Activated T-helper 1 cell treated with anti-CD3 and anti-CD28 coated beads, Interleukin-12 subunit alpha, Interleukin-12 subunit beta, Interleukin-2, Interleukin-4 antibody, amounts not matched to agents 30 ng/mL and 10 ng/mL and 1 ng/mL, durations not matched to agents 14 hours and 24 hours and 36 hours (primary cell): ENCODE measurements at regions of chr13 and their contacts with region 1.

Region 1: GRCh38 chr13:32650705-32651311 is 64.6 kb downstream of the PDS5B start:
- DNase-seq: peak; percentile 42
- H3K4me3 Mint-ChIP-seq: no peak overlapping the region
- H3K27ac Mint-ChIP-seq: no peak overlapping the region
- H3K4me1 Mint-ChIP-seq: peaks cover 52% of the 10 kb centered on the region
- H3K27me3 Mint-ChIP-seq: no peaks in the 10 kb centered on the region

Region 2: DNA sequence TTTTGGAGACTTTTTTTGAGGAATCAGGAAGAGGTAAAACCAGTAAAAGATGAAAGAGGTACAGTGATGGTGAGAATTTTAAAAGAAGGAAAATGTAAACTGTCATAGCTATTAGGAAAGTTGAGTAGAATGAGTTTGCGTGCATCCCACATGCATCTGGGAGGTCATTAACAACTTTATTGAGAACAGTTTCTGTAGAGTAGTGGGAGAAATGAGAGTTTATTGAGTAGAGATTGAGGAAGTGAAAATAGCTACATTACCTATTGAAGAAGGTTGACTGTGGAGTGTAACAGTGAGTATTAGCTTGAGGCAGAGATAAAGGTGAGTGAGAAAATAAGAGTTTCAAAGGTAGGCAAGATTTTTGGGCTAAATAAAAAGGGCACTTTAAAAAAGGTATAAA is 296.8 kb before region 1 on chr13:
- intact Hi-C with region 1: no loop called
- DNase-seq: no peak
- H3K4me3 Mint-ChIP-seq: no peak overlapping the region
- H3K27ac Mint-ChIP-seq: no peak overlapping the region
- H3K4me1 Mint-ChIP-seq: peaks cover 9% of the 10 kb centered on the region
- H3K27me3 Mint-ChIP-seq: no peaks in the 10 kb centered on the region

Region 3: GRCh38 chr13:32639502-32640105 is 11.2 kb before region 1 on chr13:
- intact Hi-C with region 1: loop called (anchors 1 kb)
- DNase-seq: peak; percentile 25
- H3K4me3 Mint-ChIP-seq: no peak overlapping the region
- H3K27ac Mint-ChIP-seq: no peak overlapping the region
- H3K4me1 Mint-ChIP-seq: peaks cover 34% of the 10 kb centered on the region
- H3K27me3 Mint-ChIP-seq: no peaks in the 10 kb centered on the region

Region 4: GRCh38 chr13:32669030-32669646 is 18.3 kb after region 1 on chr13:
- intact Hi-C with region 1: loop called (anchors 1 kb)
- DNase-seq: no peak
- H3K4me3 Mint-ChIP-seq: no peak overlapping the region
- H3K27ac Mint-ChIP-seq: no peak overlapping the region
- H3K4me1 Mint-ChIP-seq: peaks cover 4% of the 10 kb centered on the region
- H3K27me3 Mint-ChIP-seq: no peaks in the 10 kb centered on the region

Region 5: GRCh38 chr13:32791545-32792172 is 140.9 kb after region 1 on chr13:
- intact Hi-C with region 1: loop called (anchors 5 kb)
- DNase-seq: peak; percentile 33
- H3K4me3 Mint-ChIP-seq: peak overlapping the region; percentile 50
- H3K27ac Mint-ChIP-seq: peak overlapping the region; percentile 46
- H3K4me1 Mint-ChIP-seq: peaks cover 33% of the 10 kb centered on the region
- H3K27me3 Mint-ChIP-seq: no peaks in the 10 kb centered on the region